ENCODE measurements at regions of chr17 and their contacts with region 1.

Region 1: DNA sequence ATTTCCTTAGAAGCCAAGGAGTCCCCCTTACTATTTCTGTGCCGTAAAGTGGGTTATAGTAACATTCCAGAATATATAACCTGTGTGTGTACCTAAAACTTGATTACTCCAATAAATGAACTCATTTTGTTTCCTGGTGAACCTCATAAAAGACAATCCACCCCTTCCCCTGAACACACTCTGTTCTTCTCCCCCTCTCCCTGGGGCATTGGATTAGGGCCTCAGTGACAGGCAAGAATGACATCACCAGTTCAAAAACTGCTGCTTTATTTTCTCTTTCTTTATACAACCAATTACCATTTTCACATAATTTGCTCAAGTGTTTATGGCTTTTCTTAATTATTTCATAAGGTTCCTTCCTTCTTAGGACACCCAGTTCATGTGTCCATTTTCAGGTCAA is 17.4 kb downstream of the AARSD1 start:
- DNase-seq: no peak
- H3K4me3 ChIP-seq: no peak overlapping the region
- H3K27ac ChIP-seq: no peak overlapping the region
- H3K4me1 ChIP-seq: no peaks in the 10 kb centered on the region
- H3K27me3 ChIP-seq: no peaks in the 10 kb centered on the region

Region 2: DNA sequence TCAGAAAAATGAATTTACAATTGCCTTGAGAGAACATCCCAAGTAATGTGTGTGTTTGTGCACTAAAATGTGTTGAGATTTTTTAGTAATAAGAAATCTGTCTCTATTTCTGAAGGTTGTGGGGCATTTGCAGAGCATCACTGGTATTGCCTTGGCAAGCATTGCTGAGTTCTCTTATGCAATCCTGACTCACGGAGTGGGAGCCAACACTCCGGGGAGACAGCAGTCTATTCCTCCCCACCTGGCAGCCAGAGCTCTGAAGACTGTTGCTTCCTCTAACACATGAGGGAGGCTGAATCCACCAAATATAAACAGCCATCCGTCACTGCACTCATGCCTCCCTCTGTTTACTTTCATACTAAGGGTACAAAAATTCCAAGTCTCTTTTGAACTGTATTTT is 137.6 kb before region 1 on chr17:
- in situ Hi-C with region 1: no loop called
- DNase-seq: peak; percentile 96
- H3K4me3 ChIP-seq: no peak overlapping the region
- H3K27ac ChIP-seq: peak overlapping the region; percentile 76
- H3K4me1 ChIP-seq: peaks cover 19% of the 10 kb centered on the region
- H3K27me3 ChIP-seq: no peaks in the 10 kb centered on the region

Region 3: DNA sequence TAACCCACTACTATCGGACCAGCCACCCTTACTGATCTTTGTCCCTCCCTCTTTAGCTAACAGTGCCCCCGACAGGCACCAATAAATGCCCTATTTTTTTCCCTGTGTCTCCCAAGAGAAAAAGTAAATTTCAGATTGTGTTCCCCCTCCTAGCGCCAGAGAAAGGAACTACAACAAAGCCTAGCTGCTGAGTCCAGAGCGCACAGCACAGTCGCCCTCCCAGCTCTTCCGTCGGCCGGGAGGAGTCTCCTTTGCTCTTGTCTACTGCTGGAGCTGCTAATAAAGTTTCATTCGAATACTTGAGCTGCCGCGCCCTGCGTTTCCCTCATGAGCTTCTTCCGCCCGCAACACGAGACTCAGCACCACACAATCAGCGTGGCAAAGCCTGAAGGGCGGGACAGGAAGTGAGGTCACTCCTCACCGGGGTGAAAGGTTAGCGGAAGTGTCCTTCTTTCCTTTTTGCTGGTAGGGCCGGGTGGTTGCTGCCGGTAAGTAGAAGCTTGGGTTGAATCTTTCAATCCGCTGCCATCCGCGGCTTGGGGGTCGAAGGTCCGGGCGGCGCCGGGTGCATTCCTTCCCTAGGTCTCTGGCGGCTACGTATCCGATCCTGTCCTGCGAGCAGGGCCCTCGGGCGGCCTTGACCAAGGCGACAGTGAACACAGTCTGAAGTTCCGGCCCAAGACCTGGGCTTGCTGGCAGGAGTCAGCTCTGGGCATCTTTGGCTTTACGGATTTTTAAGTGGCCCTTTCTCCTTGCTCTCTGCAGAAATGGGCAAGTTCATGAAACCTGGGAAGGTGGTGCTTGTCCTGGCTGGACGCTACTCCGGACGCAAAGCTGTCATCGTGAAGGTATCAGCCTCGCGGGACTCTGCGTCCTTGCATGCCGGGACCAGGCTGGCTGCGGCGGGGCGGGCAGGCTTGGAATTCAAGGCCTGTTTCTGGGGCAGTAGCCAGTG is 51.4 kb after region 1 on chr17 and contains the start of gene RPL27:
- in situ Hi-C with region 1: loop called (anchors 5 kb)
- DNase-seq: peak; percentile 100
- H3K4me3 ChIP-seq: peak within 1 kb of the TSS; percentile 88
- H3K27ac ChIP-seq: peak within 1 kb of the TSS; percentile 93
- H3K4me1 ChIP-seq: peaks cover 24% of the 10 kb centered on the region
- H3K27me3 ChIP-seq: no peaks in the 10 kb centered on the region
- total RNA-seq, gene RPL27: 928 and 1,286 TPM in 2 replicates